A673 (cell line): ENCODE measurements at regions of chr12 and their contacts with region 1.

Region 1: DNA sequence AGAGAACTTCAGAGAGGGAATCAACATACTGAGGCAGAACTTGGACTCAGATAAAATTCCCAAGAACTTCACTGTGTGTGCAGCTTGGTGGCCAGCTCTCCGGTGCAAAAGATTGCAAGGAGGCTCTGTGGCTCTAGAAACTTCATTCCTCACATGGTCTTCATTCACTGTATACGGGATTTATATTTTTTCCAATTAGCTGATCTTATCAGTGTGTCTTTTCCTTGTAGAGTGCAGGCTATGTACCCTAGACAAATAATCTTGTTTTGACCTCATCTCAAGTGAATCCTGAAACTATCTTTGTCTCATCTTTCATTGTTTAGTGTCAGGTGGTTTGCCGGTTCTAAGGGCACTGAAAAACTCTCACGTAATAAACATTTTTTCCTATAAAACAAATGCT is 1.9 kb downstream of the OR8S1 start:
- DNase-seq: no peak
- H3K4me3 ChIP-seq: no peak overlapping the region
- H3K27ac ChIP-seq: no peak overlapping the region
- H3K4me1 ChIP-seq: no peaks in the 10 kb centered on the region
- H3K27me3 ChIP-seq: peaks cover 15% of the 10 kb centered on the region
- CTCF ChIP-seq: no peak

Region 2: GRCh38 chr12:47850153-47851084 is 676.9 kb before region 1 on chr12:
- CTCF ChIA-PET with region 1: no interaction called
- POLR2A ChIA-PET with region 1: no interaction called
- intact Hi-C with region 1: no loop called
- DNase-seq: no peak
- H3K4me3 ChIP-seq: no peak overlapping the region
- H3K27ac ChIP-seq: no peak overlapping the region
- H3K4me1 ChIP-seq: no peaks in the 10 kb centered on the region
- H3K27me3 ChIP-seq: no peaks in the 10 kb centered on the region
- CTCF ChIP-seq: no peak

Region 3: GRCh38 chr12:48542300-48542928 is 15.1 kb after region 1 on chr12:
- CTCF ChIA-PET with region 1: no interaction called
- POLR2A ChIA-PET with region 1: interaction called, 13 read pairs
- intact Hi-C with region 1: no loop called
- DNase-seq: peak; percentile 33
- H3K4me3 ChIP-seq: no peak overlapping the region
- H3K27ac ChIP-seq: no peak overlapping the region
- H3K4me1 ChIP-seq: no peaks in the 10 kb centered on the region
- H3K27me3 ChIP-seq: peaks cover 9% of the 10 kb centered on the region
- CTCF ChIP-seq: peak; percentile 66

Region 4: GRCh38 chr12:48671231-48671856 is 144.0 kb after region 1 on chr12:
- CTCF ChIA-PET with region 1: no interaction called
- POLR2A ChIA-PET with region 1: no interaction called
- intact Hi-C with region 1: no loop called
- DNase-seq: no peak
- H3K4me3 ChIP-seq: no peak overlapping the region
- H3K27ac ChIP-seq: no peak overlapping the region
- H3K4me1 ChIP-seq: no peaks in the 10 kb centered on the region
- H3K27me3 ChIP-seq: no peaks in the 10 kb centered on the region
- CTCF ChIP-seq: no peak